ENCODE measurements at regions of chr7 and their contacts with region 1.

Region 1: DNA sequence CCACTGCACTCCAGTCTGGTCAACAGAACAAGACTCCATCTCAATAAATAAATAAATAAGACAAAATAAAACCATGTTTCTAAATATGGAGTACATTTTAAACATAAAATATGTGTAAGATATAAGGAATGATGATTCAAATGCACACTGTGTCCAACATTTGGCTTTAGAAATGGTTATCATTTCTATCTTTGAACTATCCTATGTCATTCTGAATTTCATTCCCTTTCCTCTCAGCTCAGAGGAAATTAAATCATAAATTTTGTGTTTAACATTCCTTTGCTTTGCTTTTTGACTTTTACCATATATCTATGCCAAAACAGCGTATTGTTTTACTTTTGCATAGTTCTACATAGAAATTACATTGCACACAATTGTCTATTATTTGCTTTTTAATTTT is 130.9 kb downstream of the GNAT3 start:
- DNase-seq: no peak
- H3K4me3 ChIP-seq: no peak overlapping the region
- H3K27ac ChIP-seq: no peak overlapping the region
- H3K4me1 ChIP-seq: peaks cover 0 to 41% (median 11%) of the 10 kb centered on the region in 4 donors
- H3K27me3 ChIP-seq: no peaks in the 10 kb centered on the region
- CTCF ChIP-seq: no peak

Region 2: DNA sequence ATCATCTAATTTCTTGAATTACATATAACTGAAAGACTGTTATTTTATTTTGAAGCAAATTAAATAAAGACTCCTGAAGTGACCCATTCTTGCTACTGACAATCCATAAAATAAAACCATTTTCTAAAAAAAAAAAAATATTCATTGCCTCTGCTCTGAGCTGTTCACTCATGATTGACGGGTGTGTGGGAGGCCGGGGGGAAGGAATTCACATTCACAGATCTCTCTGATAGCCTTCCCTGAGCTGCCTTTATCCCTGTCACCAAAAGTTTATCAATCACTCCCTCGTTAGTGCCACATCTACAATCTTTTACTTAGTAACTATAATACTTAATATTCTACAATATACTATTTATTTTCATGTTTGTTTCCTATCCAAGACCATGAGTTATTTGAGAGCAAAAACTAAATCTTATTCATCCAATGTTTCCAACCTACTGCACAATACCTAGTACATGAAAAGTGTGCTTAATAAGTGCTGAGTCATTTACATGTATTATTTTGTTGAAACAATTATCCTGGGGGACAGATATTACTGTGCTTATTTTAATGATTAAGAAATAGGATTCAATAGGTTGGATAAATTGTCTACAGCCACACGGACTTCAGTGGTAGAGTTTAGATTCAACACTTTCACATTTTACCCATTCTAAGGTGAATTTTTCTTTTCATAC is 1963.6 kb before region 1 on chr7:
- intact Hi-C with region 1: loop called (anchors 5 kb)
- DNase-seq: no peak
- H3K4me3 ChIP-seq: no peak overlapping the region
- H3K27ac ChIP-seq: no peak overlapping the region
- H3K4me1 ChIP-seq: peaks cover 0 to 32% (median 11%) of the 10 kb centered on the region in 4 donors
- H3K27me3 ChIP-seq: no peaks in the 10 kb centered on the region
- CTCF ChIP-seq: no peak